ENCODE measurements at regions of chr9 and their contacts with region 1.

Region 1: DNA sequence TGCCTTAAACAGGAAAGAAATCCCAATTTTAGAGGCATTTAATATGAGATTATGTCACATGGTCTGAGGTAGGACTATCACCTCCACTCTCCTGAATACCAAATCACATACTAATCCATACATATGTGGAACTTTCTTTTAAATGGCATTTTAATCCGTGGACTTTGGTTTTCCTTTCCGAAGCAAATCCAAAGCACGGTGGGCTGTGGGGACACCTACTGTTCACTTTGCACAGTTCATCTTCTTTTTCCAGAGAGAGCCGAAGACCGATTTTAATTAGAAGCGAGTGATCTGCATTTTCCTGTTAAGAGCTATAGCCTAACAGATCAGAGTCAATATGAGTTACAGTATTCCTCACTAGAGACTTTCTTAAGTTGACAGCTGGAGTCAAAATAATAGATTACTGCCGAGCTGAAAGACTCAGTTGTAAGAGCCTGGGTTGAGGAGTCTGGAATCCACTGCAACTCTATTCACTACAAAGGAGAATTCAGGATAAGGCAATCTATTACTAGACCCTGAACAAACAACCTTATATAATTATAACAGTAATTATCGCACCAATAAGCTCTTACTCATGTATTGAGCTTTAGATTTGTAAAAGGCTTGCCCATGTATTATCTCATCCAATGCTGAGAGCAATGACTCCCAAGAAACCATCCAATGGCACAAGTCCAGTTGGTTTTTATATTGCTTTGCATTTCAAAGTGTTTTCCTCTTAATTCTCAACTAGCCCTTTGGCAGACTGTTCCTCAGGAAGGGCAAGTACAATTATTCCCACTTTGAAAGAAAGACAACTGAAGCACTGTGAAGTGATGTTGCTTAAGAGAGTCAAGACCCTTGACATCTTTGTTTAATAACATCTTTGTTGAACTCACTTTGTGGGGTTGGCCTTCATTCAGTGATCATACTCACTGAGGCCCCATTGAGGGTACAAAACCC is 144.7 kb downstream of the TRPM6 start:
- ATAC-seq: peak in 5 of 8 experiments; percentile 11 to 71 (median 63)
- H3K4me3 ChIP-seq: no peak overlapping the region
- H3K27ac ChIP-seq: no peak overlapping the region
- H3K4me1 ChIP-seq: no peaks in the 10 kb centered on the region

Region 2: GRCh38 chr9:73683862-73684591 is 1059.0 kb before region 1 on chr9:
- in situ Hi-C with region 1: loop called in 1 of 9 experiments (anchors 25 kb)
- ATAC-seq: peak in 4 of 8 experiments; percentile 37 to 85 (median 73)
- H3K4me3 ChIP-seq: no peak overlapping the region
- H3K27ac ChIP-seq: no peak overlapping the region
- H3K4me1 ChIP-seq: no peaks in the 10 kb centered on the region

Region 3: GRCh38 chr9:74577956-74578355 is 165.1 kb before region 1 on chr9:
- in situ Hi-C with region 1: loop called in 1 of 9 experiments (anchors 25 kb)
- ATAC-seq: no peak
- H3K4me3 ChIP-seq: no peak overlapping the region
- H3K27ac ChIP-seq: no peak overlapping the region
- H3K4me1 ChIP-seq: peaks cover 0 to 4% of the 10 kb centered on the region in 2 donors